Activated CD4-positive, alpha-beta memory T cell treated with anti-CD3 and anti-CD28 coated beads for 36 hours (primary cell): ENCODE measurements at regions of chr4 and their contacts with region 1.

Region 1: GRCh38 chr4:173318648-173319211 is 15.4 kb downstream of the HMGB2 start:
- DNase-seq: no peak
- H3K4me3 Mint-ChIP-seq: no peak overlapping the region
- H3K27ac Mint-ChIP-seq: no peak overlapping the region
- H3K4me1 Mint-ChIP-seq: peaks cover 12% of the 10 kb centered on the region
- H3K27me3 Mint-ChIP-seq: no peaks in the 10 kb centered on the region

Region 2: GRCh38 chr4:173019711-173020110 is 299.0 kb before region 1 on chr4:
- CTCF ChIA-PET with region 1: no interaction called
- POLR2A ChIA-PET with region 1: no interaction called
- intact Hi-C with region 1: loop called (anchors 5 kb)
- DNase-seq: no peak
- H3K4me3 Mint-ChIP-seq: no peak overlapping the region
- H3K27ac Mint-ChIP-seq: no peak overlapping the region
- H3K4me1 Mint-ChIP-seq: no peaks in the 10 kb centered on the region
- H3K27me3 Mint-ChIP-seq: no peaks in the 10 kb centered on the region

Region 3: GRCh38 chr4:173301518-173302201 is 17.1 kb before region 1 on chr4:
- CTCF ChIA-PET with region 1: interaction called, 28 read pairs
- POLR2A ChIA-PET with region 1: no interaction called
- intact Hi-C with region 1: no loop called
- DNase-seq: no peak
- H3K4me3 Mint-ChIP-seq: no peak overlapping the region
- H3K27ac Mint-ChIP-seq: no peak overlapping the region
- H3K4me1 Mint-ChIP-seq: peaks cover 3% of the 10 kb centered on the region
- H3K27me3 Mint-ChIP-seq: no peaks in the 10 kb centered on the region

Region 4: GRCh38 chr4:173347467-173347866 is 28.7 kb after region 1 on chr4:
- CTCF ChIA-PET with region 1: no interaction called
- POLR2A ChIA-PET with region 1: no interaction called
- intact Hi-C with region 1: no loop called
- DNase-seq: no peak
- H3K4me3 Mint-ChIP-seq: no peak overlapping the region
- H3K27ac Mint-ChIP-seq: no peak overlapping the region
- H3K4me1 Mint-ChIP-seq: no peaks in the 10 kb centered on the region
- H3K27me3 Mint-ChIP-seq: peaks cover 1% of the 10 kb centered on the region

Region 5: GRCh38 chr4:173370477-173371291 is 52.0 kb after region 1 on chr4 and contains the start of gene SAP30:
- CTCF ChIA-PET with region 1: interaction called, 15 read pairs
- POLR2A ChIA-PET with region 1: no interaction called
- intact Hi-C with region 1: loop called (anchors 1 kb)
- DNase-seq: peak; percentile 99
- H3K4me3 Mint-ChIP-seq: peak within 1 kb of the TSS; percentile 100
- H3K27ac Mint-ChIP-seq: peak within 1 kb of the TSS; percentile 99
- H3K4me1 Mint-ChIP-seq: peaks cover 33% of the 10 kb centered on the region
- H3K27me3 Mint-ChIP-seq: peaks cover 4% of the 10 kb centered on the region
- total RNA-seq, gene SAP30: 26.1 to 26.5 TPM

Region 6: DNA sequence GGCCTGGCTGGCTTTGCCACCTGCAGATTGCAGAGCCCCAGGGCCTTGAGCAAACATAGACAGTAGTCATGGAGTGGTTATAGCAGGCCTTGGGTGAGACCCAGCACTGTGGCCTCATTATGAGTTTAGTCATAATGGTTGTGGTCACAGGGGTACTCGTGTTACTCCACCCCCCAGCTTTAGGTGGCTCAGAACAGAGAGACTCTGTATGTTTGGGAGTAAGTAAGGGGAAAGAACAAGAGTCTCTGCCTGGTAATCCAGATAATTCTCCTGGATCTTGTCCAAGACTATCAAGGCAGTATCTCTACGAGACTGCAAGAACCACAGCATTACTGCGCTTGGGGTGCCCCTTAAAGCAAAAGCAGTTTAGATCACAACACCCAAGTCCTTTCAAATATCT is 142.4 kb after region 1 on chr4:
- CTCF ChIA-PET with region 1: no interaction called
- POLR2A ChIA-PET with region 1: no interaction called
- intact Hi-C with region 1: no loop called
- DNase-seq: no peak
- H3K4me3 Mint-ChIP-seq: no peak overlapping the region
- H3K27ac Mint-ChIP-seq: no peak overlapping the region
- H3K4me1 Mint-ChIP-seq: no peaks in the 10 kb centered on the region
- H3K27me3 Mint-ChIP-seq: no peaks in the 10 kb centered on the region

Region 7: DNA sequence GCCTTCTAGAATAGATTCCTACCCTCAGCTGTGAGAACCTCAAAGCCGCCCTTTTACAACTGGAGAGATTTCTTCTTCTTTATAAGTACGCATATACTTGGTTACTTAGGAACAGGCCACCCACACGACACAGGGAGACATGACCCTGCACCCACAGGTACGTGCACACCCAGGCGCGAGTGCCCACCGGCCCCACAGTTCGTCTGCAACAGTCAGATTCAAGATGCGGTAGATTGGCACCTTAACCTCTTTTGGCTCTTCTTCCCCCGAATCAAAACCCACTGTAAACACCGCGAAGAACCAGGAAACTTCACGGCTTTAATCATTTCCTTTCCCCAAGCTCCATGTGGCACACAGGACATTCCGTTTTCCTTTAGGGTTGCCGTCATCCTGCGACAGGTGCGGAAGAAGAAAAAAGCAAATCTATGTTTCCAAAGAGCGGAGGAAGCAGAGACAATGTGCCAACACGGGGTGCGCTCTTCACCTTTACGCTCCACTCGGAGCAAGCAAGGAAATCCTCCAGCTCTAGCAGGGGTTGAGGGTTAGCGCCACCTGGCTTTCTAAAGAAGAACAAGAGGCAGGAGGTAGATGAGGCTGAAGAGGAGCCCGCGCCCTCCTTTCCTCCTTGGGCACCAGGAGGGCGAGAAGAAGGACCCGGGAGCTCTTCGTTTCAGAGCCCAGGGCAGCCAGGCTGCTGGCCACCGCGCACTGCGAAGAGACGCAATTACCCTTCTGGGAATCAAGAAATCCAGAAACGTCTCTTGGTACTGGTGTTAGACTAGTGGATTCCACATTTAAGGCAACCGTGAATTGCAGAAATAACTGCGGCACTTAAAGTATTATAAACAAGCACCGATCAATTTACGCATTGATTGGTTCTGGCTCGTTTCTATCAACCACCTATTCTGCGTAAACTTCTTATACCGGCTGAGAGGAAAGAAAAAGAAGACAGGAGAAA is 175.6 kb after region 1 on chr4:
- CTCF ChIA-PET with region 1: interaction called, 6 read pairs
- POLR2A ChIA-PET with region 1: no interaction called
- intact Hi-C with region 1: loop called (anchors 1 kb)
- DNase-seq: peak; percentile 72
- H3K4me3 Mint-ChIP-seq: peak overlapping the region; percentile 77
- H3K27ac Mint-ChIP-seq: no peak overlapping the region
- H3K4me1 Mint-ChIP-seq: peaks cover 14% of the 10 kb centered on the region
- H3K27me3 Mint-ChIP-seq: peaks cover 21% of the 10 kb centered on the region